Colonic mucosa (tissue), 4 donors: ENCODE measurements at regions of chr5 and their contacts with region 1.

Region 1: DNA sequence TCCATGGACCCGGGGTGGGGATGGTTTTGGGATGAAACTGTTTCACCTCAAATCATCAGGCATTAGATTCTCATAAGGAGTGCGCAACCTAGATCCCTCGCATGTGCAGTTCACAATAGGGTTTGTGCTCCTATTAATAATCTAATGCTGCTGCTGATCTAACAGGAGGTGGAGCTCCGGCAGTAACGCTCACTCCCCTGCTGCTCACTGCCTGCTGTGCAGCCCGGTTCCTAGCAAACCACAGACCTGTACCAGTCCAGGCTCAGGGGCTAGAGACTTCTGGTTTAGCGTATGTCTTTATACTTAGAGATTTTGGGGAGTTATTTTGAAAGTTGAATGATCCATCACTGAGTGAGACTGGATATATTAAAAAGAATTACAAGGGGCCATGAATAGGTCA is 50.2 kb downstream of the RICTOR start:
- DNase-seq: no peak
- H3K4me3 ChIP-seq: no peak overlapping the region
- H3K27ac ChIP-seq: no peak overlapping the region
- H3K4me1 ChIP-seq: no peaks in the 10 kb centered on the region
- H3K27me3 ChIP-seq: no peaks in the 10 kb centered on the region
- CTCF ChIP-seq: no peak

Region 2: DNA sequence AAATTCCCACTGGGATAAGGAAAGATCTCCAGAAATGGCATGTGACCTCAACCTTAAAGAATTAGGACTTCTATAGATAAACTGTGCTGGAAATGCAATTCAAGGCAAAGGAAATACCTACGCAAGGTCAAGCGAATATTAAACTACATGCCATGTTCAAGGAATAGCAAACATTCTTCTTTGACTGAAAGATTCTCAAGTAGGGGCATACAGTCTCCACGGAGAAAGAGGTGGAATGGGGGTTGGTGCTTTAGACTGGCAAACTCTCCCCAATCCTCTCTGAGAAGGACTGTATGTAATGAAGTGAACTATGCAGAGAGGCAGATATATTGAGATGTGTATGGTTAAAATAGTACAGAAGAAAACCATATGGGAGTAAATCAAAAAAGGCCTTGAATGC is 44.1 kb after region 1 on chr5:
- intact Hi-C with region 1: loop called (anchors 5 kb)
- DNase-seq: no peak
- H3K4me3 ChIP-seq: no peak overlapping the region
- H3K27ac ChIP-seq: no peak overlapping the region
- H3K4me1 ChIP-seq: no peaks in the 10 kb centered on the region
- H3K27me3 ChIP-seq: no peaks in the 10 kb centered on the region
- CTCF ChIP-seq: no peak